Caco-2 (cell line): ENCODE measurements at regions of chr15 and their contacts with region 1.

Region 1: DNA sequence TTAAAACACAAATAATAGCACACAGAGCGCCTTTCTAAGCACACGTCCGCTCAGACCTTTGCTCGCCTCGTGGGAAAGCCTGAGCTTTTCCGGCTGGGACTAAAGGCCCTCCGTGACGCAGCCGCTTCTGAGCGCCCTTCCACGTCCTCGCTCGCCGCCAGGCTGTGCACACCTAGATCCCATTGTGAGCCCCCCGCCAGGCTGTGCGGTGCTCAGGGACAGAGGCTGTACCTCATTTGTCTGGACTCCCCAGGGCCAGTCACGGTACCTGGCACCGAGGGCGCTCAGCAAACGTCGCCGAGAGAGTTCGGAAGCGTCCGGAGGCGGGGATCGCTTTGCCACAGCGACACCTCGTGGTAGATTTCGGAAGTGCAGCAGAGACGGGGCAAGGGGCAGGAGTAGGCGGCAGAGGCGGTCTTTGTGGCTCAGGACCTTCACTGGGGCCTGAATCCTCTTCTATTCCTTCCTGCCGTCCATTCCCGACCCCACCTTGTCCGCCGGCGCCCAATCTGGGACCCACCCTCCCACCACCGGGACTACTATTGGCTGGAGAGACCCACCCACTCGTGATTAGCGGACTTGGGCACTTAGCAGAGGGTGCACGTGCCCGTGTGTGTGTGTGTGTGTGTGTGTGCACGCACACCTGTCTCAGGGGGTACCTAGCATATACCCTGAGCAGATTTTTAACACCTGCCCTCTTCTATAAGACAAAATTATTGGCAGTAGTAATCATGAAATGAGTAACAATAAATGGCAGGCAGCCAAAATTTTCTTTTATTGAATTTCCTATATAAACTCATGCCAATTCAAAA is 65.6 kb downstream of the RHCG start:
- DNase-seq: peak; percentile 81 to 91
- H3K4me3 ChIP-seq: peak overlapping the region; percentile 73
- H3K4me3 Mint-ChIP-seq: peak overlapping the region; percentile 80
- H3K27ac Mint-ChIP-seq: peak overlapping the region; percentile 78
- H3K4me1 ChIP-seq: no peaks in the 10 kb centered on the region
- H3K4me1 Mint-ChIP-seq: peaks cover 7% of the 10 kb centered on the region
- H3K27me3 ChIP-seq: no peaks in the 10 kb centered on the region
- H3K27me3 Mint-ChIP-seq: no peaks in the 10 kb centered on the region
- CTCF ChIP-seq: peak; percentile 88 to 94

Region 2: GRCh38 chr15:89358755-89359439 is 71.8 kb before region 1 on chr15:
- CTCF ChIA-PET with region 1: interaction called, 38 read pairs
- POLR2A ChIA-PET with region 1: no interaction called
- intact Hi-C with region 1: loop called (anchors 1 kb)
- DNase-seq: peak; percentile 55 to 83
- H3K4me3 ChIP-seq: peak overlapping the region; percentile 65
- H3K4me3 Mint-ChIP-seq: peak overlapping the region; percentile 78
- H3K27ac Mint-ChIP-seq: no peak overlapping the region
- H3K4me1 ChIP-seq: no peaks in the 10 kb centered on the region
- H3K4me1 Mint-ChIP-seq: no peaks in the 10 kb centered on the region
- H3K27me3 ChIP-seq: peaks cover 6% of the 10 kb centered on the region
- H3K27me3 Mint-ChIP-seq: peaks cover 42% of the 10 kb centered on the region
- CTCF ChIP-seq: peak; percentile 57 to 97

Region 3: DNA sequence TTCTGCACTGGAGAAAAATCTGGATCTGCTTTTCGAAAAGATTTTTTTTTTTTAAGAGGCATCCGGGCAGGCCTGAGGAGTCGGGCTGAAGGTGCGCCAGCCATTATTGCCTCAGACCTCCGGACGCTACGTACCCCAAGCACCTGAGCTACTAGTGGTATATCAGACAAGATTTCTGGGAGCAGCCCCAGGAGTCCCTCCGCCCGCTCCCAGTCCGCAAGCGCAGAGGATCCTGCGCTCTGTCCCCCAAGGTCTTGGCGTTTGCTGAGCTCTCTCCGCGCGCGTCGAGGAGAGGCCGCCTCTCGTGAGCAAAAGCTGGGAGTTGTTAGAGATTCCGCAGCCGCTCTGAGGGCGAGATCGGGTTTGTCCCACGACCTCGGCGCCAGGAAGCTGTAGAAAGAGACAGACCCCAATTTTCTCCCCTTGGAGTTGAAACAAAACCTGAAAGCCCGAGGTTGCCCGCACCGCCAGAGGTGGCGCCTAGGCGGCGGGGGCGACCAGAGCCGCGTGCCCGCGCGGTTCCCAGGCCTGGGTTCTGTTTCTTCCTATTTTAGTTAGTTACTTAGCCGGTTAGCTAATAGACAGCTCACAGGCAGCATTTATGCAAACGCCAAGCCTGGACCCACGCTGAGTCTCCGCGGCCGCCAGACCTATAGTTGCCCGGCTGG is 23.7 kb before region 1 on chr15:
- CTCF ChIA-PET with region 1: no interaction called
- POLR2A ChIA-PET with region 1: no interaction called
- intact Hi-C with region 1: no loop called
- DNase-seq: no peak
- H3K4me3 ChIP-seq: no peak overlapping the region
- H3K4me3 Mint-ChIP-seq: no peak overlapping the region
- H3K27ac Mint-ChIP-seq: no peak overlapping the region
- H3K4me1 ChIP-seq: no peaks in the 10 kb centered on the region
- H3K4me1 Mint-ChIP-seq: no peaks in the 10 kb centered on the region
- H3K27me3 ChIP-seq: peaks cover 1% of the 10 kb centered on the region
- H3K27me3 Mint-ChIP-seq: peaks cover 10% of the 10 kb centered on the region
- CTCF ChIP-seq: no peak

Region 4: DNA sequence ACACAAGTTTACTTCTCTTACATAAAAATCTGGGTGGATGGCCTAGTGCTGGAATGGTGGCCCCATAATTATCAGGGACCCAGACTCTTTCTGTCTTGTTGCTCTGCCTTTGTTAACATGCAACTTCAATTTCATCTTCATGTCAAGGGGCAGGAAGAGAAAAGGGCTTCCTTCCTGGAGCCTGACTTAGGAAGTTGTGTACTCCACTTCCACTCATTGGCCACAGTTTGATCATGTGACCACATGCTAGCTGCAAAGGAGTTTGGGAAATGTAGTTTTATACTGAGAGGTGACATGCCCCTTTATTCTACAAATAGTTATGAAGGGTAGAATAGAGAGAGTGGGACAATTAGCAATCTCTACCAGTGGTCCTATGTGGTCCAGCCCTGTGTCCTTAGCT is 26.4 kb after region 1 on chr15:
- CTCF ChIA-PET with region 1: no interaction called
- POLR2A ChIA-PET with region 1: no interaction called
- intact Hi-C with region 1: no loop called
- DNase-seq: peak; percentile 41 to 53
- H3K4me3 ChIP-seq: no peak overlapping the region
- H3K4me3 Mint-ChIP-seq: no peak overlapping the region
- H3K27ac Mint-ChIP-seq: no peak overlapping the region
- H3K4me1 ChIP-seq: peaks cover 57% of the 10 kb centered on the region
- H3K4me1 Mint-ChIP-seq: peaks cover 26% of the 10 kb centered on the region
- H3K27me3 ChIP-seq: no peaks in the 10 kb centered on the region
- H3K27me3 Mint-ChIP-seq: no peaks in the 10 kb centered on the region
- CTCF ChIP-seq: no peak